ENCODE measurements at regions of chr21 and their contacts with region 1.

Region 1: DNA sequence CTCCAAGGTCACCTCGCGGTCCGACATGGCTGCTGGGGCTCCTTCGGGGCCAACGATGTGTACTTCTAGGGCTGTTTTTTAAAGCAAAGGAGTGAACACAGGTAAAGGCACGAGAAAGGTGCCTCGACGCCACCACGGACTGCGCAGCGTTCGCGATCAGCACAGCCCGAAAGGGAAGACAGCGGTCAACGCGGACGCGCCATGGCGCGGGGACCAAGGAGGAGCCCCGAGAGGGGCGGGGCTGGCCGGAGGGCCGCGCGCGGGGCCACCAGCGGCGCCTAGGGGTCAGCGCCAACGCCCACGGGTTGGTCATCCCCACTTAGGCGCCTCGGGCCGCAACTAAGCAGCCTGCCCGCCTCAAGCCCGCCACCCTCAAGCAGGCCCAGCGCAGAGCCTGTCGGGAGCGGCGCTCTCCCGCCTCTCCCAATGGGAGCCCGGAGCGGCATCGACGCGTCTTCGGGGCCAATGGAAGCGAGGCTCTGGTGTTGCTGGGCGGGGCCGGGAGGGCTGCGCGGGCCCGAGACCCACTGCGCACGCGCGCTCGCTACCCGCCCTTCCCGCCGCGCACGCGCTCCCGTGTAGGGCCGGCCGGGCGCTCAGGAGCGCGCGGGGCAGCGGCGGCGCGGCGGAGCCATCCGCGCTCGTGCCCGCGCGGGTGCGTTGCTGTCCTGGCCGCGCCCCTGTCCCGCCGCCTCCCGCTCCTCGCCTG is at the start of gene DIP2A:
- DNase-seq: peak; percentile 99 to 100 (median 99)
- ATAC-seq: peak; percentile 97
- H3K4me3 ChIP-seq: peak within 1 kb of the TSS; percentile 69
- H3K27ac ChIP-seq: peak within 1 kb of the TSS; percentile 97
- H3K4me1 ChIP-seq: peaks cover 28 to 30% of the 10 kb centered on the region in 2 experiments
- H3K27me3 ChIP-seq: no peaks in the 10 kb centered on the region
- CTCF ChIP-seq: peak; percentile 47 to 60 (median 55); a peak in 5 of 6 replicates
- EP300 ChIP-seq: peak; percentile 56; the same call in 1 of the 2 replicates
- POLR2A ChIP-seq: peak; percentile 96
- RAD21 ChIP-seq: peak in 1 of 2 experiments; percentile 20; a peak in 3 of 4 replicates
- polyA plus RNA-seq, gene DIP2A: 4.3 to 4.6 TPM

Region 2: DNA sequence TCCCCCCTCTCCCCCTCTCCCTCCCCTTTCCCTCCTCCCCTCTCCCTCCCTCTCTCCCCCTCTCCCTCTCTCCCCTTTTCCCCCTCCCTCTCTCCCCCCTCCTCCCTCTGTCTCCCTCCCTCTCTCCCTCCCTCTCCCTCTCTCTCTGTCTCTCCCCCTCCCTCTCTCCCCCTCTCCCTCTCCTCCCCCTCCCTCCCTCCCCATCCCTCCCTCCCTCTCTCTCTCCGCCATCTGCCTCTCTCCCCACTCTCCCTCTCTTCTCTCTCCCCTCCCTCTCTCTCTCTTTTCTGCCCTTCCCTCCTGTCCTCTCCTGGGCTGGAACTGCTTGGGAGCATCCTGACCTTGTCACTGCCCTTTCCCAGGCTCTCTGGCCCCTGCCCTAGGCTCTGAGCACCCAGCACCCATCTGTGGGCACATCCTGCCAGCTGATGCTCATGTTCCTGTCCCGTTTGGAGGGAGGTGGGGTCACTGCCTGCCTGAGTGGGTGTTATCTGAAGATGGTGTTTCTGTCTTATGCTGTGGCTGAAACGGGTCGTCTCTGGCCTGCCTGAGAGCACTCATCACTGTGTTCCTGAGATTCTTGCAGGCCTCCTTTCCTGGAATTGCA is 313.9 kb before region 1 on chr21:
- CTCF ChIA-PET with region 1: no interaction called
- POLR2A ChIA-PET with region 1: interaction called, 5 read pairs
- in situ Hi-C with region 1: no loop called
- intact Hi-C with region 1: loop called (anchors 10 kb)
- DNase-seq: no peak
- ATAC-seq: no peak
- H3K4me3 ChIP-seq: no peak overlapping the region
- H3K27ac ChIP-seq: no peak overlapping the region; the same call in 2 of the 3 replicates
- H3K4me1 ChIP-seq: peaks cover 5 to 43% of the 10 kb centered on the region in 2 experiments; a peak in 4 of 5 replicates
- H3K27me3 ChIP-seq: peaks cover 6 to 13% of the 10 kb centered on the region in 2 experiments; a peak in 4 of 5 replicates
- CTCF ChIP-seq: no peak
- EP300 ChIP-seq: no peak
- POLR2A ChIP-seq: no peak
- RAD21 ChIP-seq: no peak

Region 3: GRCh38 chr21:46285761-46286496 is 172.5 kb before region 1 on chr21 and contains the start of gene YBEY:
- CTCF ChIA-PET with region 1: no interaction called
- POLR2A ChIA-PET with region 1: no interaction called
- in situ Hi-C with region 1: no loop called
- intact Hi-C with region 1: loop called (anchors 5 kb)
- DNase-seq: peak; percentile 95 to 97 (median 96)
- ATAC-seq: peak; percentile 97
- H3K4me3 ChIP-seq: peak within 1 kb of the TSS; percentile 74
- H3K27ac ChIP-seq: peak within 1 kb of the TSS; percentile 94
- H3K4me1 ChIP-seq: peaks cover 18 to 23% of the 10 kb centered on the region in 2 experiments
- H3K27me3 ChIP-seq: no peaks in the 10 kb centered on the region
- CTCF ChIP-seq: peak; percentile 41 to 57 (median 57)
- EP300 ChIP-seq: peak; percentile 19; the same call in 1 of the 2 replicates
- POLR2A ChIP-seq: peak; percentile 95
- RAD21 ChIP-seq: peak; percentile 39 to 50
- polyA plus RNA-seq, gene YBEY: 6.4 to 9.4 TPM

Region 4: DNA sequence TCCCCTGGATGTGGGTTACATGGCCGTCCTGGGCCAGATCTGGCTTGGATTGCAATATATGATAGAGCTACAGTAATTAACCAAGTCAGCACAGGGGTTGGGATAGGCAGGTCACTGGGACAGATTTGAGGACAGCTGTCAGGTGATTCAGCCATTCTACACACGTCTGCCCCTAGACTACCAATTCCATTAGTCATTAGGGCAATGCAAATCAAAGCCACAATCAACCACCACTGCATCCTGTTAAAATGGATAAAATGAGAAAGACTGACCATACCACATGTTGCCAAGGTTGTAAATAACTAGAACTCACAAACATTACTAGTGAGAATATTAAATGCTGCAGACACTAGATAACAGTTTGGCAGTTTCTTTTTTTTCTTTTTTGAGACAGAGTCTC is 150.8 kb before region 1 on chr21:
- CTCF ChIA-PET with region 1: no interaction called
- POLR2A ChIA-PET with region 1: no interaction called
- in situ Hi-C with region 1: no loop called
- intact Hi-C with region 1: no loop called
- DNase-seq: no peak
- ATAC-seq: no peak
- H3K4me3 ChIP-seq: no peak overlapping the region
- H3K27ac ChIP-seq: no peak overlapping the region
- H3K4me1 ChIP-seq: 0 out of 5 replicates have a peak, but pooled peaks cover 0 to 3% of the 10 kb centered on the region in 2 experiments
- H3K27me3 ChIP-seq: no peaks in the 10 kb centered on the region
- CTCF ChIP-seq: no peak
- EP300 ChIP-seq: no peak
- POLR2A ChIP-seq: no peak
- RAD21 ChIP-seq: no peak

Region 5: GRCh38 chr21:46323227-46324128 is 135.0 kb before region 1 on chr21 and contains the start of gene C21orf58:
- CTCF ChIA-PET with region 1: no interaction called
- POLR2A ChIA-PET with region 1: interaction called, 4 read pairs
- in situ Hi-C with region 1: no loop called
- intact Hi-C with region 1: loop called (anchors 1 kb)
- DNase-seq: peak; percentile 98 to 100 (median 99)
- ATAC-seq: peak; percentile 84
- H3K4me3 ChIP-seq: peak within 1 kb of the TSS; percentile 89
- H3K27ac ChIP-seq: peak within 1 kb of the TSS; percentile 99
- H3K4me1 ChIP-seq: peaks cover 32 to 61% of the 10 kb centered on the region in 2 experiments; a peak in 4 of 5 replicates
- H3K27me3 ChIP-seq: no peaks in the 10 kb centered on the region
- CTCF ChIP-seq: no peak
- EP300 ChIP-seq: 0 out of 2 replicates have a peak, but pooled peaks have one; percentile 13
- POLR2A ChIP-seq: peak; percentile 96; the same call in 1 of the 2 replicates
- RAD21 ChIP-seq: no peak
- polyA plus RNA-seq, gene C21orf58: 1.2 to 1.9 TPM

Region 6: DNA sequence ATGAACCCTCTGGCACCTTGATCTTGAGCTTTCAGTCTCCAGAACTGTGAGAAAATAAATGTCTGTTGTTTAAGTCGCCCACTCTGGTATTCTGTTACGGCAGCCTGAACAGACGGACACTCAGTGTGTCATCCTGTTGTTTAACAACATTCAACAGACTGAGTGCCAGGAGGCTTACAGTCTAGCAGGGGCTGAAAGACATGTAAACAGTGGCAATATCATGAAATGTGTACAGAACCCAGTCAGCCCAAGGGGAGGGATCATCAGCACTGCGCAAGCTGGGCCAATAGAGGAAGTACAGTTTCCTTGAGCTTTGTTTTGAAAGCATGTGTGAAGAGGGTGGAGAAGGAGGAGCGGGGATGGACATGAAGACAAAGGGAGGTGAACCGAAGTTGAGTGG is 13.8 kb after region 1 on chr21:
- CTCF ChIA-PET with region 1: no interaction called
- POLR2A ChIA-PET with region 1: interaction called, 47 read pairs
- in situ Hi-C with region 1: no loop called
- intact Hi-C with region 1: no loop called
- DNase-seq: no peak
- ATAC-seq: peak; percentile 65
- H3K4me3 ChIP-seq: no peak overlapping the region
- H3K27ac ChIP-seq: no peak overlapping the region
- H3K4me1 ChIP-seq: no peaks in the 10 kb centered on the region
- H3K27me3 ChIP-seq: no peaks in the 10 kb centered on the region
- CTCF ChIP-seq: no peak
- EP300 ChIP-seq: no peak
- POLR2A ChIP-seq: 0 out of 2 replicates have a peak, but pooled peaks have one; percentile 42
- RAD21 ChIP-seq: no peak

Region 7: DNA sequence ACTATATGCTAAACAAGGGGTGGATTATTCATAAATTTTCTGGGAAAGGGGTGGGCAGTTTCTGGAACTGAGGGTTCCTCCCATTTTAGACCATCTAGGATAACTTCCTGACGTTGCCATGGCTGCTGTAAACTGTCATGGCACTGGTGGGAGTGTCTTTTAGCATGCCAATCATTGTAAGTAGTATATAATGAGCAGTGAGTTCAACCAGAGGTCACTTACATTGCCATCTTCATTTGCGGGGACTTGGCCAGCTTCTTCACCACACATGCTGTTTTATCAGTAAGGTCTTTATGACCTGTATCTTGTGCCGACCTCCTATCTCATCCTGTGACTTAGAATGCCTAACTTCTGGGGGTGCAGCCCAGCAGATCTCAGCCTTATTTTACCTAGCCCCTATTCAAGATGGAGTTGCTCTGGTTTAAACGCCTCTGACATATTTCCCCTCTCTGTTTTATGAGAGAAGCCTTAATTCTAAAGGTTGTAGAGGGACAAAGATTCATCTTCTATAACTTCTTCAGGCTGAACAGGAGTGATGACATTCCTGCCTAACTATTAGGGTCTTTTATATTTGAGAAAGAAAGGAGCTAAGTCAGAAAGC is 60.6 kb after region 1 on chr21:
- CTCF ChIA-PET with region 1: no interaction called
- POLR2A ChIA-PET with region 1: interaction called, 3 read pairs
- in situ Hi-C with region 1: no loop called
- intact Hi-C with region 1: loop called (anchors 2 kb)
- DNase-seq: peak in 3 of 4 experiments; percentile 31 to 88 (median 57)
- ATAC-seq: peak; percentile 94
- H3K4me3 ChIP-seq: no peak overlapping the region
- H3K27ac ChIP-seq: peak overlapping the region; percentile 60; the same call in 1 of the 3 replicates
- H3K4me1 ChIP-seq: peaks cover 3 to 13% of the 10 kb centered on the region in 2 experiments
- H3K27me3 ChIP-seq: no peaks in the 10 kb centered on the region
- CTCF ChIP-seq: no peak
- EP300 ChIP-seq: no peak
- POLR2A ChIP-seq: no peak
- RAD21 ChIP-seq: no peak

Measured in K562 (cell line).